ENCODE measurements at regions of chr7 and their contacts with region 1.

Region 1: GRCh38 chr7:40134428-40135316 is at the starts of genes MPLKIP and SUGCT:
- DNase-seq: peak; percentile 96
- H3K4me3 Mint-ChIP-seq: peak within 1 kb of the TSS; percentile 95
- H3K27ac Mint-ChIP-seq: peak within 1 kb of the TSS; percentile 94
- H3K4me1 Mint-ChIP-seq: peaks cover 11% of the 10 kb centered on the region
- H3K27me3 Mint-ChIP-seq: peaks cover 11% of the 10 kb centered on the region
- total RNA-seq, gene MPLKIP: 37.3 and 40.8 TPM in 2 replicates
- total RNA-seq, gene SUGCT: 0.91 and 1.0 TPM in 2 replicates

Region 2: GRCh38 chr7:39566023-39566921 is 568.4 kb before region 1 on chr7 and contains the start of gene YAE1:
- intact Hi-C with region 1: loop called (anchors 5 kb)
- DNase-seq: peak; percentile 94
- H3K4me3 Mint-ChIP-seq: peak within 1 kb of the TSS; percentile 99
- H3K27ac Mint-ChIP-seq: peak within 1 kb of the TSS; percentile 97
- H3K4me1 Mint-ChIP-seq: peaks cover 19% of the 10 kb centered on the region
- H3K27me3 Mint-ChIP-seq: peaks cover 7% of the 10 kb centered on the region
- total RNA-seq, gene YAE1: 14.2 and 14.3 TPM in 2 replicates

Region 3: DNA sequence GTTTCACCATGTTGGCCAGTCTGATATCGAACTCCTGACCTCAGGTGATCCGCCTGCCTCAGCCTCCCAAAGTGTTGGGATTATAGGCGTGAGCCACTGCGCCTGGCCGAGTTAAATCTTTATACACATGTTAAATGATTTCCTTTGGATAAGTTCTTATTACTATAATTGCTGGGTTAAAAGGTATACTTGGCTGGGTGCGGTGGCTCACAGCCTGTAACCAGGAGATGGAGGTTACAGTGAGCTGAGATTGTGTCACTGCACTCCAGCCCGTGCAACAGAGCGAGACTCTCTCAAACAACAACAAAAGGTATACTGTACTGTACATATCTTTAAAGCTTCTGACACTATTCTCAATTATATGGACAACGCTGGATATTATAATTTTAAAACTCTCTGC is 237.8 kb before region 1 on chr7:
- intact Hi-C with region 1: loop called (anchors 2 kb)
- DNase-seq: no peak
- H3K4me3 Mint-ChIP-seq: no peak overlapping the region
- H3K27ac Mint-ChIP-seq: no peak overlapping the region
- H3K4me1 Mint-ChIP-seq: peaks cover 2% of the 10 kb centered on the region
- H3K27me3 Mint-ChIP-seq: peaks cover 32% of the 10 kb centered on the region

Measured in activated CD4-positive, alpha-beta T cell treated with anti-CD3 and anti-CD28 coated beads, Interleukin-2, amount 10 ng/mL, durations not matched to agents 24 days and 14 days (primary cell).